Heart left ventricle (tissue), 16 donors: ENCODE measurements at regions of chr4 and their contacts with region 1.

Region 1: GRCh38 chr4:98260579-98261290 is 449 bp upstream of the RAP1GDS1 start:
- DNase-seq: peak; percentile 96 to 98 (median 98)
- ATAC-seq: peak; percentile 98 to 99 (median 98)
- H3K4me3 ChIP-seq: peak overlapping the region; percentile 43 to 99 (median 84)
- H3K27ac ChIP-seq: peak overlapping the region; percentile 85 to 99 (median 96)
- H3K4me1 ChIP-seq: peaks cover 0 to 32% (median 17%) of the 10 kb centered on the region in 12 donors
- H3K27me3 ChIP-seq: no peaks in the 10 kb centered on the region
- CTCF ChIP-seq: no peak
- POLR2A ChIP-seq: peak; percentile 61 to 89

Region 2: DNA sequence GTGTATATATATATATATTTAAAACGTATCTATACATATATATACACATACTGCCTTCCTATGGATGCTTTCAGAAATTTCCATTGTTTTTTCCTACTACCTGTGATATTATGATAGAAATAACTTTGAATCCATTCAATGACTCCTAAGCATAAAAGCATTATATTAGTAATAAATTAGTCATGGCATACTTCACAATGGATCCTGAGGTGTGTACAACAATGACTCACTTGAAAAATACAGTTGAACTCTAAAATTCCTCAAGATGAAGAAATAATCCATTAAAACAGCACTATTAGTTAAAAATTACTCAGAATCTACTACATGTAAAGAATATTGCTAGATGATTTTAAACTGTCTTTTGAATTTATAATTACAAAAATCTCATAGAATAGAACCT is 318.6 kb before region 1 on chr4:
- intact Hi-C with region 1: no loop called
- DNase-seq: no peak
- ATAC-seq: no peak
- H3K4me3 ChIP-seq: no peak overlapping the region
- H3K27ac ChIP-seq: no peak overlapping the region
- H3K4me1 ChIP-seq: no peaks in the 10 kb centered on the region
- H3K27me3 ChIP-seq: no peaks in the 10 kb centered on the region
- CTCF ChIP-seq: no peak
- POLR2A ChIP-seq: no peak

Region 3: DNA sequence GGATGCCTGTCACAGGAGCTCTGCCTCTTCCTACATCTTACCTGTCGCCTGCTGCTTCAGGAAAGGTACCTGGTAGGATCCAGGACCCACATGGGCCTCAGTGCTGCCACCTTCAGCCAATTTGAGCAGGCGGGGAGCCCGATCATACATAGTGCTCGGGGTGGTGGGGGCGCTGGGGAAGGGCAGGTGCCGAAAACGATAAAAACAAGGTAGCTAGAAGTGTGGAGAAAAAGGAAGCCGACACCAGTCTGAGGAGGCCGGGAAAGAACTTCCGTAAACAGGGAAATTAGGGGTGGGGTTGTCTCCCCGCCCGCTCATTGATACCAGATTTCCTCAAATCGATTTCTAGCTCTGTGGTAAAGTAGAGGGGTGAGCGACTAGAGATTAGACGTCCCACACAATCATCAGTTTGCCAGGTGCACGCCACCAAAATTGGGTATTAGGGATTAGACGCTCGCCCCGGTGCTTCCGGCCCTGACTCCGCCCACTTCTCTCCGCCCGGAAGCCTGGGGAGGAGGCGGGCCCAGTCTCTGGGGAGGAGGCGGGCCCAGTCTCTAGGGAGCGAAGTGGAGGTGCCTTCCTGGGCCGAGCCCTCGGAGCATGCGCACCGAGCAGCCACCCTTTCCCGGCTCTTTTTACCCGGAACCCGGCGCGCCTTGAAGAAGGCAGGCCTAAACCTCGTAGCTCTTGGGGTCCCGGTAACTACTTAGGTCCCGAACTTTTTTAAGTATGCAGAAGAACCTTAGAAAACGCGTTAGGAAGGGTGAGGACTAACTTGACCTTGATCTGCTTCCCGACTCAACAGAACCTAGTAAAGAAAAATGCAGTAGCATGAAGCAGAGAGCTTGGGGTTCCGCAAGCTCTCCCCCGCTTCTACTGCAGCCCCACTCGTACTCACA is 117.5 kb before region 1 on chr4 and contains the start of gene STPG2:
- intact Hi-C with region 1: loop called in 6 of 10 experiments (anchors 2 to 10 kb)
- DNase-seq: peak; percentile 91 to 97 (median 96)
- ATAC-seq: peak; percentile 100
- H3K4me3 ChIP-seq: peak within 1 kb of the TSS; percentile 52 to 88 (median 72)
- H3K27ac ChIP-seq: peak within 1 kb of the TSS; percentile 33 to 91 (median 83)
- H3K4me1 ChIP-seq: peaks cover 0 to 9% (median 0%) of the 10 kb centered on the region in 12 donors
- H3K27me3 ChIP-seq: no peaks in the 10 kb centered on the region
- CTCF ChIP-seq: peak; percentile 7 to 60 (median 38)
- POLR2A ChIP-seq: peak in 1 of 2 donors; percentile 63
- total RNA-seq, gene STPG2: 0.16 to 0.71 (median 0.32) TPM in 7 of 9 donors, not detected in the others

Region 4: DNA sequence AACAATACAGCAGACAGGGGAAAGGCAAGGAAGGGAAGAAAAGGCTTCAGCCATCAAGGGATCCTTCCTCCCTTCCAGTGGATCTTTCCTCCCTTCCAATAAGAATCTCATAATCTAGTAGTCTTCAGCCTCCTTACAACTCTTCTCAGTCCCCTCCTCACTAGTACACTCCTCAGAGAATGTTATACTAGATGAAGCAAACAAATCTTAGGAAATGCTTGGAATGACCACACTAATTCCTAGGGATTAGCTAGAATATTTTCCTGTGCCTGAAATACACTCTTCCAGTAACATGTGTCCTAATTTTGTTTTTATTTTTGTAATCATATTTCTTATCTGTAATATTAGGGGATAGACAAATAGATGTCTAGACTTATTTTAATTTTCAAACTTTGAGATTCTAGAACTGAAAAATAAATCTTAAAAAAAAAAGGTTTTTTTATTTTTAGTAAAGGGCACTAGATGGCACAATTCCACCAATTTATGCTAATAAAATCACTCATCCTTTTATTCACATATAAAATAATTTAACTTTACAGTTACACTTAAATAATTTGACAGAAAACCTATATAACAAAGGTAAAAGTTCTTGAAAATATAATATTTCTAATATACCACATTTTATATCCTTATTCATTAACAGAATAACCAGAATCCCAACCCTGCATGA is 110.5 kb before region 1 on chr4:
- intact Hi-C with region 1: loop called in 3 of 10 experiments (anchors 10 kb)
- DNase-seq: no peak
- ATAC-seq: no peak
- H3K4me3 ChIP-seq: no peak overlapping the region
- H3K27ac ChIP-seq: no peak overlapping the region
- H3K4me1 ChIP-seq: peaks cover 0 to 9% (median 0%) of the 10 kb centered on the region in 12 donors
- H3K27me3 ChIP-seq: no peaks in the 10 kb centered on the region
- CTCF ChIP-seq: peak in 5 of 12 donors; percentile 31 to 40 (median 37)
- POLR2A ChIP-seq: no peak

Region 5: DNA sequence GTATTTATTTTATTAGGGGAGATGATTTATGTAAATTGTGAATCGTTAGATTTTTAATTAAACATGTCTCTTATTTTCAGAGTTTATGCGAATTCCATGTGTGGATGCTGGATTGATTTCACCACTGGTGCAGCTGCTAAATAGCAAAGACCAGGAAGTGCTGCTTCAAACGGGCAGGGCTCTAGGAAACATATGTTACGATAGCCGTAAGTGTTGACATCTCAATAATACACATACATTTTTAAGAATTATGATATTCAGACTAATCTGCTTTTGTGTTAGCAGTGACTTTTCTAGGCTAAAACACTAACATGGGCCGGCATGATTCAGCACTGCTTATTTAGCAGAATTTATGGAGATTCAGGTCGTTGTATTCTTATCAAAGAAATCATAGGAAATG is 91.7 kb after region 1 on chr4:
- intact Hi-C with region 1: loop called in 1 of 10 experiments (anchors 10 kb)
- DNase-seq: no peak
- ATAC-seq: no peak
- H3K4me3 ChIP-seq: peak overlapping the region in 1 of 12 donors; percentile 33
- H3K27ac ChIP-seq: no peak overlapping the region
- H3K4me1 ChIP-seq: peaks cover 0 to 5% (median 0%) of the 10 kb centered on the region in 12 donors
- H3K27me3 ChIP-seq: no peaks in the 10 kb centered on the region
- CTCF ChIP-seq: no peak
- POLR2A ChIP-seq: no peak

Region 6: DNA sequence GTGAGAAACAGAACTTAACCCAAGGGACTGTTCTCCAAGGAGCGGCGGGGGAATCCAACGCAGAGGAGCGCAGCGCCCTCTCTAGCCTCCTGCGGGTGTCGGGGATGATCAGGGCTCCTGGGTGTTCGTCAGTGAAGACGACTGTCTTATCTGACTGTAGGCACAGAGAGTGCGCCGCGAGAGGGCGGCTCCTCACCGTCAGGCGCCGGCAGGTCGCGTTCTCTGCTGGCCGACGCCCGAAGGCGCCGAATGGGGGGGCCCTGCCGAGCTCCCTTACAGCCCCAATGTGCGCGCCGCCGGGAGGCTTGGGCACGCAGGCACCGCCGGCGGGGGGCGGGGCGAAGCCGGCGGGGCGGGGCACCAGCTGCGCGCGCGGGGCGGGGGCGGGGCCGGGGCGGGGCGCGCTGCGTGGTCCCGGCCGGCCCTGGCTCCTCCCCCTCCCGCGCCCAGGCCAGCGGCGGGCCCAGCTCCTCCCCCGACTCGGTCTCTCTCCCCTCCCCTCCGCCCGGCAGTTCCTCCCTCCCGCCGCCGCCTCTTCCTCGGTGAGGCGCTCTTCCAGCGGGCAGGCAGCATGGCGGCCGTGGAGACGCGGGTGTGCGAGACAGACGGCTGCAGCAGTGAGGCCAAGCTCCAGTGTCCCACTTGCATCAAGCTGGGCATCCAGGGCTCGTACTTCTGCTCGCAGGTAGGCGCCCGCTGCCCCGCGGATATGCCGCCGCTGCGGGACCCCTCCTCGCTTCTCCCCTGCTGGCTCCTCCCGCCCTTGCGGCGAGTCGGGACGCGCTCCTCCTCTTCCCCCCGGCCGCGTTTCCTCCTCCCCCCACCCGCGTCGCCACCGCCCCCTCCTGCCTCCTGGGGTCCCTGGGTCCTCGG is 734.7 kb after region 1 on chr4 and contains the start of gene METAP1:
- intact Hi-C with region 1: loop called in 3 of 10 experiments (anchors 5 kb)
- DNase-seq: peak; percentile 94 to 97 (median 96)
- ATAC-seq: peak; percentile 92 to 97 (median 96)
- H3K4me3 ChIP-seq: peak within 1 kb of the TSS; percentile 89 to 99 (median 96)
- H3K27ac ChIP-seq: peak within 1 kb of the TSS; percentile 88 to 96 (median 92)
- H3K4me1 ChIP-seq: peaks cover 0 to 26% (median 15%) of the 10 kb centered on the region in 12 donors
- H3K27me3 ChIP-seq: no peaks in the 10 kb centered on the region
- CTCF ChIP-seq: peak; percentile 32 to 80 (median 56)
- POLR2A ChIP-seq: peak; percentile 26 to 69
- total RNA-seq, gene METAP1: 51.8 to 71.4 (median 63.6) TPM

Region 7: GRCh38 chr4:99088481-99089365 is 828.0 kb after region 1 on chr4 and contains the start of gene ADH5:
- intact Hi-C with region 1: loop called in 2 of 10 experiments (anchors 5 to 10 kb)
- DNase-seq: peak; percentile 90 to 94 (median 93)
- ATAC-seq: peak; percentile 98 to 100 (median 98)
- H3K4me3 ChIP-seq: peak within 1 kb of the TSS; percentile 37 to 88 (median 69)
- H3K27ac ChIP-seq: peak within 1 kb of the TSS; percentile 84 to 96 (median 92)
- H3K4me1 ChIP-seq: peaks cover 0 to 57% (median 30%) of the 10 kb centered on the region in 12 donors
- H3K27me3 ChIP-seq: no peaks in the 10 kb centered on the region
- CTCF ChIP-seq: no peak
- POLR2A ChIP-seq: peak in 1 of 2 donors; percentile 82
- total RNA-seq, gene ADH5: 122 to 246 (median 145) TPM